Activated CD4-positive, alpha-beta T cell treated with anti-CD3 and anti-CD28 coated beads, Interleukin-2, amount 10 ng/mL, durations not matched to agents 7 days and 5 days (primary cell): ENCODE measurements at regions of chr2 and their contacts with region 1.

Region 1: DNA sequence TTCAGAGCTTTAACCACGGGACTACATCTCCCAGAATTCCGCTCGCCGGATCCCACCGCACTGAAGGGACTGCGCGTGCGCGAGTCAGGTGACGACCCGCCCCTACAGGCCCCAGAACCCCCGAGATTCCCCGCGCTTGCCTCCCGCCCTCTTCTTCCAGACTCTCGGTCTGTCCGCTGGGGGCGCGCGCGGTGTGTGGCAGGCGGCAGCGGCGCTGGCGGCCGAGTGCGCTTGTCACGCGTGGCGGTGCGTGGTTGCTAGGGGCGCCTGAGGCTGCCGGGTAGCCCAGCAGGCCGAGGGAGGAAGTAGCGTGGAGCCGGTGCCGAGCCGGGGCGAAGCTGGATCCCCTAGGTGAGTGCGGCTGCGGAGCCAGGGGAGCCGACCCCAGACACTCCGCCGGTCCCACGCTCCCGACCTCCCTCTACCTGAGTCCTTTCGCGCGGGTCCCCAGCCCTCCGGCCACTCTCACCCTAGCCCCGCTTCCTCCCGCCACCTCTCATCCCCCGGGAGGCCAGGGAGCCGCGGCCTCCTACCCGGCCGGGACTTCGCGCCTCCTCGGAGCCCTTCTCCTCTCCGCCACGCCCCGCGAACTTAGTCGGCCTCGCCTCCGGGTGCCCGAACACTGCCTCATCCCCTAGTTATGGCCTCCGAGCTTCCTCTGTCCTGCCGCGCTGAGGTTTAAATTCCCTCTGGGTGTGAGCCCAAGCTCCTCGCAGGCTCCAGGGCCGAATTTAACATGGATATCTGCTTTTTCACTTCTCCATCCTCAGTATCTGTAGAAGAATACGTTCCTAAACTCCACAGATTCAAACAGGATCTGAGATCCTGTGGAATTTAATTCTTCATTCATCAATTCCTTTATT is at the start of gene TTLL4:
- DNase-seq: peak; percentile 98
- H3K4me3 Mint-ChIP-seq: peak within 1 kb of the TSS; percentile 98
- H3K27ac Mint-ChIP-seq: peak within 1 kb of the TSS; percentile 79
- H3K4me1 Mint-ChIP-seq: peaks cover 30% of the 10 kb centered on the region
- H3K27me3 Mint-ChIP-seq: peaks cover 10% of the 10 kb centered on the region
- total RNA-seq, gene TTLL4: 31.6 TPM

Region 2: GRCh38 chr2:218618102-218618860 is 92.6 kb before region 1 on chr2:
- CTCF ChIA-PET with region 1: no interaction called
- POLR2A ChIA-PET with region 1: no interaction called
- DNase-seq: no peak
- H3K4me3 Mint-ChIP-seq: no peak overlapping the region
- H3K27ac Mint-ChIP-seq: peak overlapping the region; percentile 10
- H3K4me1 Mint-ChIP-seq: no peaks in the 10 kb centered on the region
- H3K27me3 Mint-ChIP-seq: no peaks in the 10 kb centered on the region

Region 3: DNA sequence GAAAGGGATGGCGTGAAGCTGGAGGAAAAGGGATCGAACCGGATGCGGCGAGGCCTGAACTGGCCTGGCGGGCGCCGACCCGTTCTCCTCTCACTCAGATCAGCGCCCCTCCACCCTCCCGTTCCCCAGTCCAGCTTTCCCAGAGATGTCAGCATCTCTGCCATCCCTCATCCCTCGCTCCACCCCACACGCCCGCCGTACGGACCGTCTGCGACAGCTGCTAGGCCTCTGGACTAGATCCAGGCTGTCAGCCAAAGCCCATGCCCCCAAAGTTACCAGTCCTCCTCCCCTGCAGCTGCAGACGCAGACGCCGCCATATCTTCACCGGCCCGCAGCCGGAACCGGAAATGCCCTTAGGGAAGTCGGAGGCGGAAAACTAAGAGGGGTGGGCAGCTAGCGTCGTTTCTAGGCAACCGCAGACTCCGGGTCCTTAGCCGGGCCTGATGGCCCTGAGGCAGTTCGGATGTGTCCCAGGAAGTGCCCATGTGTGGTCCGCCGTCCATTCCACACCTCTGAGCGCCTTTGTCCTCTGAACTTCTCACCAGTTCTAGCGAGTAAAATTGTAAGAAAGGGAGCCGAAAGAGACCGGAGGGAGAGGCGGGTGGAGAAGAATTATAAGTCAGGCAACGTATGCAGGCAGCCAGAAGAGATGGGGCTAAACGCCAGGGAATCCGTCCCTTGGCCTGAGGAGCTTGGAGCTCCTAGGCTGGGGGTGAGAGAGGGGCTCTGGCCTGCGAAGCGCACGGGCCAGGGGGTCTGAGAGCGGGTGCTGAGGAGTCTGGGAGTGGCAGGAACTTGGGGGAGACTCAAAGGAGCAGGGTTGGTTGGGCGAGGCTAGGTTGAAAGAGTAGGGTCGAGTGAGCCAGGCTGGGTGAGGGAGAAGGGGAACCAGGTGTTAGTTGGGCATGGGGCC is 39.0 kb before region 1 on chr2 and contains the starts of genes RNF25 and STK36:
- CTCF ChIA-PET with region 1: interaction called, 14 read pairs
- POLR2A ChIA-PET with region 1: no interaction called
- DNase-seq: peak; percentile 87
- H3K4me3 Mint-ChIP-seq: peak within 1 kb of the TSS; percentile 96
- H3K27ac Mint-ChIP-seq: peak within 1 kb of the TSS; percentile 93
- H3K4me1 Mint-ChIP-seq: peaks cover 26% of the 10 kb centered on the region
- H3K27me3 Mint-ChIP-seq: no peaks in the 10 kb centered on the region
- total RNA-seq, gene RNF25: 20.6 to 29.8 TPM
- total RNA-seq, gene STK36: 14.6 to 17.3 TPM

Region 4: GRCh38 chr2:218727502-218728165 is 16.7 kb after region 1 on chr2:
- CTCF ChIA-PET with region 1: interaction called, 20 read pairs
- POLR2A ChIA-PET with region 1: no interaction called
- DNase-seq: peak; percentile 16
- H3K4me3 Mint-ChIP-seq: no peak overlapping the region
- H3K27ac Mint-ChIP-seq: no peak overlapping the region
- H3K4me1 Mint-ChIP-seq: peaks cover 11% of the 10 kb centered on the region
- H3K27me3 Mint-ChIP-seq: no peaks in the 10 kb centered on the region

Region 5: GRCh38 chr2:218733171-218734021 is 22.5 kb after region 1 on chr2:
- CTCF ChIA-PET with region 1: interaction called, 14 read pairs
- POLR2A ChIA-PET with region 1: no interaction called
- DNase-seq: peak; percentile 10
- H3K4me3 Mint-ChIP-seq: no peak overlapping the region
- H3K27ac Mint-ChIP-seq: peak overlapping the region; percentile 28
- H3K4me1 Mint-ChIP-seq: peaks cover 22% of the 10 kb centered on the region
- H3K27me3 Mint-ChIP-seq: no peaks in the 10 kb centered on the region